HepG2 (cell line): ENCODE measurements at regions of chr17 and their contacts with region 1.

Region 1: GRCh38 chr17:17972126-17972951 is at the starts of genes DRC3 and TOM1L2:
- DNase-seq: peak; percentile 100
- ATAC-seq: peak; percentile 97
- H3K4me3 ChIP-seq: peak within 1 kb of the TSS; percentile 77 to 90 (median 90)
- H3K27ac ChIP-seq: no peak within 1 kb of the TSS
- H3K4me1 ChIP-seq: peaks cover 23% of the 10 kb centered on the region
- H3K27me3 ChIP-seq: peaks cover 4 to 13% of the 10 kb centered on the region in 2 experiments; a peak in 2 of 5 replicates
- CTCF ChIP-seq: no peak
- EP300 ChIP-seq: no peak; a peak in 1 of 4 replicates
- POLR2A ChIP-seq: peak; percentile 43 to 75; a peak in 3 of 4 replicates
- RAD21 ChIP-seq: 0 out of 2 replicates have a peak, but pooled peaks have one; percentile 25
- total RNA-seq, gene DRC3: 0.53 and 0.73 TPM in 2 replicates
- total RNA-seq, gene TOM1L2: 4.5 and 4.7 TPM in 2 replicates

Region 2: GRCh38 chr17:17983376-17983775 is 11.0 kb after region 1 on chr17:
- CTCF ChIA-PET with region 1: no interaction called
- POLR2A ChIA-PET with region 1: interaction called, 13 read pairs
- in situ Hi-C with region 1: no loop called
- intact Hi-C with region 1: no loop called
- DNase-seq: no peak
- ATAC-seq: peak; percentile 67
- H3K4me3 ChIP-seq: peak overlapping the region in 1 of 3 experiments; percentile 30; a peak in 1 of 6 replicates
- H3K27ac ChIP-seq: no peak overlapping the region
- H3K4me1 ChIP-seq: peaks cover 17% of the 10 kb centered on the region
- H3K27me3 ChIP-seq: peaks cover 0 to 14% of the 10 kb centered on the region in 2 experiments; a peak in 3 of 5 replicates
- CTCF ChIP-seq: no peak
- EP300 ChIP-seq: no peak
- POLR2A ChIP-seq: no peak
- RAD21 ChIP-seq: no peak

Region 3: GRCh38 chr17:18017958-18018357 is 45.6 kb after region 1 on chr17:
- CTCF ChIA-PET with region 1: no interaction called
- POLR2A ChIA-PET with region 1: interaction called, 4 read pairs
- in situ Hi-C with region 1: no loop called
- intact Hi-C with region 1: loop called (anchors 1 kb)
- DNase-seq: peak; percentile 91
- ATAC-seq: peak; percentile 93
- H3K4me3 ChIP-seq: peak overlapping the region in 1 of 3 experiments; percentile 44; a peak in 3 of 6 replicates
- H3K27ac ChIP-seq: peak overlapping the region; percentile 71
- H3K4me1 ChIP-seq: peaks cover 30% of the 10 kb centered on the region
- H3K27me3 ChIP-seq: no peaks in the 10 kb centered on the region
- CTCF ChIP-seq: no peak
- EP300 ChIP-seq: peak in 1 of 2 experiments; percentile 78; a peak in 1 of 4 replicates
- POLR2A ChIP-seq: no peak
- RAD21 ChIP-seq: no peak

Region 4: GRCh38 chr17:18038861-18039534 is 66.7 kb after region 1 on chr17 and contains the starts of genes ATPAF2 and GID4:
- CTCF ChIA-PET with region 1: no interaction called
- POLR2A ChIA-PET with region 1: no interaction called
- in situ Hi-C with region 1: no loop called
- intact Hi-C with region 1: no loop called
- DNase-seq: peak; percentile 96
- ATAC-seq: peak; percentile 90
- H3K4me3 ChIP-seq: peak within 1 kb of the TSS; percentile 73 to 89 (median 89)
- H3K27ac ChIP-seq: peak within 1 kb of the TSS; percentile 58
- H3K4me1 ChIP-seq: peaks cover 60% of the 10 kb centered on the region
- H3K27me3 ChIP-seq: no peaks in the 10 kb centered on the region; a peak in 1 of 5 replicates
- CTCF ChIP-seq: peak; percentile 40
- EP300 ChIP-seq: 0 out of 4 replicates have a peak, but pooled peaks of 1 of the 2 experiments have one; percentile 32
- POLR2A ChIP-seq: peak; percentile 71 to 83
- RAD21 ChIP-seq: peak; percentile 55
- total RNA-seq, gene ATPAF2: 14.2 and 15.0 TPM in 2 replicates
- total RNA-seq, gene GID4: 4.3 and 5.5 TPM in 2 replicates

Region 5: DNA sequence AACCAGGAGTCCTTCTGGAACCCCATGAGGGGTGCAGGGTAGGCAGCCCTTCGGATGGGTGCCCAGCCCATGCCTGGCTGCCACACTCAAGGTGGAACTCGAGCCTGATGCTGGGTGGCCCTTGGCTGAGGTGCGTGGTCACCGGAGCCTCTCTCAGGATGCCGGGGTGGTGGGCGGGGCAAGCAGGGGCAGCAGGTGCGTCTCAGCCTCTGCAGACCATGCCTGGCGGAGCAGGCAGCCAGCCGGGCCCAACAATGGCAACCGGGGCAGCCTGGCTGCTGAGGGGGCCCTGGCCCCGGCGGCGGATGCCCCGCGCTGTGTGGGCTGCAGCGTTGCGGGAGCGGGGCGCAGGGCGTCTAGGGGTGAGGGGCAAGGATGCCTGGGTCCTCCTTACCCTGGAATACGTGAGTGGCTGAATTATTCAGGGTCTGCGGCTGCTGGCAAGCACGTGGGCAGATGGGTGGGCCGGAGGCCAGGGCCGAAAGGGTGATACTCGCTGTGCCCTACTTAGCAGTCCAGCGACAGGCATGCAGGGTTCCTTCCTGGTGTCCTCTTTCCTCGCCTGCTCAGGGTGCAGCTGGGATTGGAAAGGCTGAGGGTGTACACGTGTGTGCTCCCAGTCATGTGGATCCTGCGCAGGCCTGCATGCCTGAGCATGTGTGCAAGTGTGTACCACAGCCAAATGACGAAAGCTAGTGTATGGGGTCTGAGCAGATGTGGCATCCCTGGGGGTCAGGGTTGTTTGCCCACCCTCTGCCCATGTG is 150.8 kb after region 1 on chr17:
- CTCF ChIA-PET with region 1: no interaction called
- POLR2A ChIA-PET with region 1: no interaction called
- in situ Hi-C with region 1: no loop called
- intact Hi-C with region 1: no loop called
- DNase-seq: no peak
- ATAC-seq: no peak
- H3K4me3 ChIP-seq: no peak overlapping the region
- H3K27ac ChIP-seq: no peak overlapping the region
- H3K4me1 ChIP-seq: peaks cover 3% of the 10 kb centered on the region
- H3K27me3 ChIP-seq: peaks cover 6 to 23% of the 10 kb centered on the region in 2 experiments; a peak in 3 of 5 replicates
- CTCF ChIP-seq: no peak
- EP300 ChIP-seq: no peak
- POLR2A ChIP-seq: no peak
- RAD21 ChIP-seq: no peak

Region 6: GRCh38 chr17:18153749-18154161 is 181.4 kb after region 1 on chr17:
- CTCF ChIA-PET with region 1: no interaction called
- POLR2A ChIA-PET with region 1: no interaction called
- in situ Hi-C with region 1: no loop called
- intact Hi-C with region 1: no loop called
- DNase-seq: peak; percentile 41
- ATAC-seq: peak; percentile 74
- H3K4me3 ChIP-seq: peak overlapping the region; percentile 47 to 58 (median 52); a peak in 4 of 6 replicates
- H3K27ac ChIP-seq: no peak overlapping the region
- H3K4me1 ChIP-seq: peaks cover 13% of the 10 kb centered on the region
- H3K27me3 ChIP-seq: peaks cover 4 to 11% of the 10 kb centered on the region in 2 experiments; a peak in 3 of 5 replicates
- CTCF ChIP-seq: peak; percentile 21
- EP300 ChIP-seq: no peak
- POLR2A ChIP-seq: no peak
- RAD21 ChIP-seq: no peak